ENCODE measurements at regions of chr7 and their contacts with region 1.

Region 1: DNA sequence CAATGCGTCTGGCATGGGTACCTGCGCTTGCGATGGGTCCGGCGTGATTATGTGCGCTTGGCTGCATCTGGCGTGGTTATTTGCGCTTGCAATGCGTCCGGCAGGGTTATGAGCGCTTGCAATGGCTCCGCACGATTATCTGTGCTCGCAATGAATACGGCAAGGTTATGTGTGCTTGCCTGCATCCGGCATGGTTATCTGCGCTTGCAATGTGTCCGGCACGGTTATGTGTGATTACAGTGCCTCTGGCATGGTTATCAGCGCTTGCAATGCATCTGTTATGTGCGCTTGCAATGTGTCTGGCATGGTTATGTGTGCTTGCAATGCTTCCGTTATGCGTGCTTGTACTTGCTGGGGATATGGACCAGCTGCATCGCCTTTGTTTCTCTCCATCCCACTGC is 37.7 kb downstream of the RBAK start:
- DNase-seq: no peak
- ATAC-seq: no peak
- H3K4me3 ChIP-seq: no peak overlapping the region
- H3K27ac ChIP-seq: no peak overlapping the region
- H3K4me1 ChIP-seq: peaks cover 0 to 5% (median 0%) of the 10 kb centered on the region in 9 donors
- H3K27me3 ChIP-seq: peaks cover 0 to 48% (median 32%) of the 10 kb centered on the region in 7 donors
- CTCF ChIP-seq: no peak

Region 2: DNA sequence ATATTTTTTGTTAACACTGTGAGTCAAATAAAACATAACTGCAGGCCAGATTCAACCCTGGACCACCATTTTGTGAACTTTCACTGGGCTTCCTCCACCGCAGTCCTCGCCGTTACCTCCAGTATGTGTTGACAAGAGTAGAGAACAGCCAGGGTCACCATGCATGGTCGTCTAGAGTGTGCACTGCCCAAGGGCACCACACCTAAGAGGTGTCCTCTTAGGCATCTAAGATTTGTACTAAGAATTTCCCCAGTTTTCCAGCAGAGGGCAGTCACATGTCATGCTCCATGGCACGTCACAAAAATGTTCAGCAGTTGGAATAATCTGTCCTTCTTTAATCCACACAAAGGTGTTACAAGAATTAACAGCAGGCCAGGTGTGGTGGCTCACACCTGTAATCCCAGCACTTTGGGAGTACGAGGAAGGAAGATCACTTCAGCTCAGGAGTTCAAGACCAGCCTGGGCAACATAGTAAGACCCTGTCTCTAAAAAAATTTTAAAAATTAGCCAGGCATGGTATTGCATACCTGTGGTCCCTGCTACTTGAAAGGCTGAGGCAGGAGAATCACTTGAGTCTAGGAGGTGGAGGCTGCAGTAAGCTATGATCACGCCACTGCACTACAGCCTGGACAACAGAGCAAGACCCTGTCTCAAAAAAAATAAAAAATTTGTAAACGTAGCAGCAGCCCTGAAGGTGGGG is 472.4 kb before region 1 on chr7:
- intact Hi-C with region 1: loop called in 1 of 10 experiments (anchors 10 kb)
- DNase-seq: peak in 1 of 2 donors; percentile 66
- ATAC-seq: peak; percentile 52 to 78 (median 68)
- H3K4me3 ChIP-seq: no peak overlapping the region
- H3K27ac ChIP-seq: no peak overlapping the region
- H3K4me1 ChIP-seq: peaks cover 0 to 23% (median 15%) of the 10 kb centered on the region in 9 donors
- H3K27me3 ChIP-seq: peaks cover 0 to 8% (median 0%) of the 10 kb centered on the region in 7 donors
- CTCF ChIP-seq: peak; percentile 57 to 89 (median 83)

Region 3: DNA sequence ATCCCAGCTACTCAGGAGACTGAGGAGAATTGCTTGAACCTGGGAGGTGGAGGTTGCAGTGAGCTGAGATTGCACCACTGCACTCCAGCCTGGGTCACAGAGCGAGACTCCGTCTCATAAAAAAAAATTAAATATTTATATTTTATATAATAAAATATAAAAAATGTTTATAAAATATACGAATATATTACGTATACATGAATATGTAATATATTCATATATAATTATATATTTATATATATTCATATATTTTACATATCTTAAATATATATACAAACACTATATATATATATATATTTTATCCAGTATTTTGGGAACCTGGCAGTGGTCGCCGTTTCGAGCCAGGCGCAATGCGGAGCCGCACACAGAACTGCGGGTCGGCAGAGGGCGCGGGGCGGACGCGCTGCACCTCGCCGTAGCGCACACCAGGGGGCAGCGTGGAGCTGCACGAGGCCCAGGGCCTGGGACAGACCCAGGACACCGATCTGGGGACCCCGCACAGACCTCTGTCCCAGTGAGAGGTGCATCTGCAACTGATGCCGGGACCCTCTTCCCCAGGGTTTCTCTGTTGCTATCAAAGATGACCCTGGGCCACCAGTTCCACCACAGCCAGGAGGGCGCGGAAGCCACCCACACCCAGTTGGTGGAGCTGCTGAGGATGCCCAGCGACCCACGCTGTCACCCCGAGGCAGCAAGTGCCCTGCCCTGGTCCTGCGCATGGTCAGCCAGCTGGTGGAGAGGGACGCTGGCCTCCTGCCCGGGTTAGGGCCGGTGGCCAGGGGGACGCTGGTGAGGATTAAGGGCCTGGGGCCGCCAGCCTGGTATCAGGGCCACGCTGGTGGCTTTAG is 285.2 kb before region 1 on chr7:
- intact Hi-C with region 1: loop called in 8 of 10 experiments (anchors 2 to 10 kb)
- DNase-seq: peak in 1 of 2 donors; percentile 72
- ATAC-seq: peak; percentile 43 to 76 (median 72)
- H3K4me3 ChIP-seq: no peak overlapping the region
- H3K27ac ChIP-seq: peak overlapping the region in 6 of 10 donors; percentile 25 to 67 (median 48)
- H3K4me1 ChIP-seq: peaks cover 0 to 32% (median 9%) of the 10 kb centered on the region in 9 donors
- H3K27me3 ChIP-seq: no peaks in the 10 kb centered on the region
- CTCF ChIP-seq: peak; percentile 72 to 98 (median 89)

Region 4: GRCh38 chr7:4809091-4809591 is 274.2 kb before region 1 on chr7:
- intact Hi-C with region 1: loop called in 1 of 10 experiments (anchors 10 kb)
- DNase-seq: peak; percentile 59 to 61
- ATAC-seq: peak in 6 of 8 donors; percentile 29 to 82 (median 53)
- H3K4me3 ChIP-seq: peak overlapping the region in 6 of 10 donors; percentile 1 to 40 (median 28)
- H3K27ac ChIP-seq: peak overlapping the region in 7 of 10 donors; percentile 29 to 83 (median 58)
- H3K4me1 ChIP-seq: peaks cover 0 to 12% (median 0%) of the 10 kb centered on the region in 9 donors
- H3K27me3 ChIP-seq: peaks cover 0 to 20% (median 0%) of the 10 kb centered on the region in 7 donors
- CTCF ChIP-seq: no peak

Region 5: DNA sequence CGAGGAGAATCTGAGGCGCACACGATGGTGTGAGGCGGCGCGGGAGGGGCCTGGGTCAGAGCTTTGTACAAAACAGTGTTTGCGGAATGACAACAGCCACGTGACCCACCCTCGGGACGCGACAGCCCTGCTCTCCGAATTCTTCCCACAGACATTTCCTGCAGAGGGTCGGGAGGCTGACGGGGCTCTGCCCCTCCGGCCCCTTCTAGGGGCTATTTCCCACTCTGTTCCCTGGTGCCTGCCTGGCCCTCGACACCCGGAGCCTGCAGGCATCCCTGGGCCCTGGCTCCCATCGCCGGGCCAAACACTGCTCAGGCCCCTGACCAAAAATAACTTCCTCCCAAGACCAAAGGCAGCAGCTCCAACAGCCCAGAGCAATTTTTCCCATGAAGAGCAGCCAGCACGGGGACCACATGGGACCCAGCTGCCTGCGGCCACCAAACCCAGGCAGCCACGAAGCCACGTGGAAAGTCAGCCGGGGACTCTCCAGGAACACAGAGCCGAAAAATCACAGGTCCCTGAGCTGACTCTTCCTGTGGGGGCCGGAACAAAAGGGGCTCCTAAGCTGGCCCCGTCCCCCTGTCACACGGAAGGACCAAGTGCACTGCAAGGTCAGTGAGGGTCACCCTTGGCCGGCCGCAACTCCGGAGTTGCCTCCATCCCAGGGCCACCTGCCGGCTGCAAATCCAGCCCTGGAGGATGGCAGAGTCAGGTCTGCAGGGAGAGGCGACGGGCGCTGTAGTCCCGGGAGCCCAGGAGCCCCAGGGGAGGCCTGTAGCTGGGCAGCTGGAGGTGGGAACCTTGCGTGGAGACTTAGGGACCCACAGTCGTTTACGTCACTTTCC is 263.5 kb before region 1 on chr7:
- intact Hi-C with region 1: loop called in 1 of 10 experiments (anchors 10 kb)
- DNase-seq: peak; percentile 66 to 70
- ATAC-seq: peak; percentile 32 to 76 (median 72)
- H3K4me3 ChIP-seq: peak overlapping the region in 2 of 10 donors; percentile 6
- H3K27ac ChIP-seq: peak overlapping the region; percentile 6 to 86 (median 71)
- H3K4me1 ChIP-seq: peaks cover 3 to 55% (median 19%) of the 10 kb centered on the region in 9 donors
- H3K27me3 ChIP-seq: no peaks in the 10 kb centered on the region
- CTCF ChIP-seq: no peak

Region 6: GRCh38 chr7:4849369-4849768 is 233.9 kb before region 1 on chr7:
- intact Hi-C with region 1: loop called in 3 of 10 experiments (anchors 5 to 10 kb)
- DNase-seq: no peak
- ATAC-seq: no peak
- H3K4me3 ChIP-seq: no peak overlapping the region
- H3K27ac ChIP-seq: no peak overlapping the region
- H3K4me1 ChIP-seq: peaks cover 0 to 12% (median 0%) of the 10 kb centered on the region in 9 donors
- H3K27me3 ChIP-seq: peaks cover 0 to 8% (median 0%) of the 10 kb centered on the region in 7 donors
- CTCF ChIP-seq: peak in 5 of 9 donors; percentile 13 to 42 (median 20)

Region 7: GRCh38 chr7:4973728-4974198 is 109.5 kb before region 1 on chr7:
- intact Hi-C with region 1: loop called in 5 of 10 experiments (anchors 5 to 10 kb)
- DNase-seq: peak; percentile 88 to 92
- ATAC-seq: peak; percentile 96 to 99 (median 98)
- H3K4me3 ChIP-seq: peak overlapping the region; percentile 73 to 92 (median 88)
- H3K27ac ChIP-seq: peak overlapping the region; percentile 60 to 92 (median 86)
- H3K4me1 ChIP-seq: peaks cover 0 to 20% (median 13%) of the 10 kb centered on the region in 9 donors
- H3K27me3 ChIP-seq: no peaks in the 10 kb centered on the region
- CTCF ChIP-seq: peak; percentile 71 to 95 (median 83)

Region 8: DNA sequence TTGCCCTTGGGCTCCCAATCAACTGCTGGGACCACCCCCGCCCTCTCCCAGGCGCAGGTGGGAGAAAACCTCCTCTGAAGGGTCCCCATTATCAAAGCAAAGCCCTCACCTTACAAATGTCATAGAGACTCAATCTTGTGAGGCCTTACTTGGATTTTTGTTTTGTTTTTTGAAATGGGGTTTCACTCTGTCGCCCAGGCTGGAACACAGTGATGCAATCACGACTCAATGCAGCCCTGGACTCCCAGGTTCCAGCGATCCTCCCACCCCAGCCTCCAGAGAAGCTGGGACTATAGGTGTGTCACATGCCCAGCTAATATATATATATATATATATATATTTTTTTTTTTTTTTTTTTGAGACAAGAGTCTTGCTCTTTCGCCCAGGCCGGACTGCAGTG is 49.2 kb after region 1 on chr7:
- intact Hi-C with region 1: no loop called
- DNase-seq: no peak
- ATAC-seq: no peak
- H3K4me3 ChIP-seq: no peak overlapping the region
- H3K27ac ChIP-seq: no peak overlapping the region
- H3K4me1 ChIP-seq: no peaks in the 10 kb centered on the region
- H3K27me3 ChIP-seq: peaks cover 0 to 14% (median 0%) of the 10 kb centered on the region in 7 donors
- CTCF ChIP-seq: no peak